ENCODE measurements at regions of chr9 and their contacts with region 1.

Region 1: GRCh38 chr9:34701769-34702736 is 7.9 kb downstream of the CCL21 start:
- DNase-seq: peak; percentile 89
- H3K4me3 Mint-ChIP-seq: peak overlapping the region; percentile 77
- H3K27ac Mint-ChIP-seq: peak overlapping the region; percentile 38
- H3K4me1 Mint-ChIP-seq: peaks cover 2% of the 10 kb centered on the region
- H3K27me3 Mint-ChIP-seq: peaks cover 2% of the 10 kb centered on the region

Region 2: GRCh38 chr9:34524349-34524748 is 177.7 kb before region 1 on chr9:
- CTCF ChIA-PET with region 1: no interaction called
- POLR2A ChIA-PET with region 1: no interaction called
- intact Hi-C with region 1: no loop called
- DNase-seq: no peak
- H3K4me3 Mint-ChIP-seq: no peak overlapping the region
- H3K27ac Mint-ChIP-seq: no peak overlapping the region
- H3K4me1 Mint-ChIP-seq: peaks cover 16% of the 10 kb centered on the region
- H3K27me3 Mint-ChIP-seq: peaks cover 5% of the 10 kb centered on the region

Region 3: DNA sequence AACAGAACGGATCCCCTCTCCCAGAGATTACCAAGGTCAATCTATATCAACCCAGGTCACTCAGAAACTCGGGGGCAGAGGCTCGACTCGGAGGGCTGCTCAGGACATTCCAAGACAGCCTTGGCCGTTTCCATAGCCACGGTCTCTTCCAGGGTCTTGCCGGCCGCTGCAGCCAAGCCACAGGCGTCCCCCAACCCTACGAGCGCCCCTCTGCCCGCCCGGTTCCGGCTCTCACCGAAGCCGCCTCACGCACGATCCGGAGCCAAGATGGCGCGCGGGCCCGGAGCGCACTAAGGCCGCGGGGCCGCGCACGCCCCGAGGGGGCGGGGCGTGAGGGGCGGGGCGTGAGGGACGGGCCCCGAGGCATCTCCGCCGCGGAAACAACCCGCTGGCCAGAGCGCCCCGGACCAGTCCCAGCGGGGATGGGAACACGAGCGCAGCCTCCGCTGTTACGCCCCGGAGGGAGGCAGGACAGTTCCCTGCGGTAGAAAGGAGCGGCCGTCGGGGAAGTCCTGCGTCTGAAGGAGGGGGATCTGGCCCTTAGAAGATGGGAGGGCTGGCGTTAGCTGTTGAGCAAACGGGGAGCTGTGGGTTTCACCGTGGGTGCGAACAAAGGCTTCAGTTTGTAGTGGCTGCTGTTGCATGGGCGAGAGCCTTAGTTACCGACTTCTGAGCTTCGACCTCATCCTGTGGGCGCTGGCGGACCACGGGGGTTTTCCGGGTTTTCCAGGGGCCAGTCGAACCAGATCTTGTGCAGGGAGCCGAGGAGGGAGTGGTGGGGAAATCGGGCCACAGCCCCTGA is 90.0 kb before region 1 on chr9 and contains the start of gene RPP25L:
- CTCF ChIA-PET with region 1: interaction called, 9 read pairs
- POLR2A ChIA-PET with region 1: no interaction called
- intact Hi-C with region 1: loop called (anchors 1 kb)
- DNase-seq: peak; percentile 88
- H3K4me3 Mint-ChIP-seq: peak within 1 kb of the TSS; percentile 89
- H3K27ac Mint-ChIP-seq: peak within 1 kb of the TSS; percentile 85
- H3K4me1 Mint-ChIP-seq: peaks cover 21% of the 10 kb centered on the region
- H3K27me3 Mint-ChIP-seq: no peaks in the 10 kb centered on the region
- total RNA-seq, gene RPP25L: 29.3 to 31.1 TPM

Region 4: DNA sequence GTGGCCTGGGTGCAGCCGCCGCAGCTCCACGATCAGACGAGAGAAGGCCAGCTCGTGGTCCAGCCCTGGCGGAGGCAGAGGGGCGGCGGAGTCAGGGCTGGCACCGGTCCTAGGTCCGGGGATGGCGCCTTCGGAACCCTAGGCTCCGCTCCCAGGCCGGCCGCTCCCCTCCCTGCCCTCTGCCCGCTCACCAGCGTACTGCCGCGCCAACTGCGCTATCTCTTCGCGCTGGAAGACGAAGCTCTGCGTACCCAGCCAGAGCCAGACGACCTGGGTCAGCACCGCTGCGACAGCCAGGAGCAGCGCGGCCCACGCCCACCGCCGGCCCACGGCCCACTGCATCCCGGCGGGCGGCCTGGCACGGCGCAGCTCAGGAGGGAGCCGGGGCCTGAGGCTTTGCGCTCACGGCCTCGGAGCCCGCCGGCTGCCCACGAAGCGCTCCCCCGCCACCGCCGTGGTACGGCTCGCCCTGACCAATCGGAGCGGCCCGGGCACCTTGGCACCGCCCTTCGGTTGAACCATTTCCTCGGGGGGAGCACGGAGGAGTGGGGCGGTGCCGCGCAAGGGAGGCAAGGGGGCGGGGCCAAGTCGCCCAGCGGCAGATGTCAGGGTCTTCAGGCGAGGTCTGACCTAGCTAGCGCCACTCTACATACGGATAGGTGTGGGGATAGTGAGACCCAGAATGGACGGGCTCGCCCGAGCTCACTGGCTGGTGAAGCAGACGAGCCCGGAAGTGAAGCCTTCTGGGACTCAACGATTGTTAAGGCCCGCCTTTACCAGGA is 64.5 kb before region 1 on chr9 and contains the start of gene SIGMAR1:
- CTCF ChIA-PET with region 1: interaction called, 16 read pairs
- POLR2A ChIA-PET with region 1: no interaction called
- intact Hi-C with region 1: no loop called
- DNase-seq: peak; percentile 94
- H3K4me3 Mint-ChIP-seq: peak within 1 kb of the TSS; percentile 94
- H3K27ac Mint-ChIP-seq: peak within 1 kb of the TSS; percentile 80
- H3K4me1 Mint-ChIP-seq: peaks cover 41% of the 10 kb centered on the region
- H3K27me3 Mint-ChIP-seq: no peaks in the 10 kb centered on the region
- total RNA-seq, gene SIGMAR1: 65.9 to 67.6 TPM

Region 5: DNA sequence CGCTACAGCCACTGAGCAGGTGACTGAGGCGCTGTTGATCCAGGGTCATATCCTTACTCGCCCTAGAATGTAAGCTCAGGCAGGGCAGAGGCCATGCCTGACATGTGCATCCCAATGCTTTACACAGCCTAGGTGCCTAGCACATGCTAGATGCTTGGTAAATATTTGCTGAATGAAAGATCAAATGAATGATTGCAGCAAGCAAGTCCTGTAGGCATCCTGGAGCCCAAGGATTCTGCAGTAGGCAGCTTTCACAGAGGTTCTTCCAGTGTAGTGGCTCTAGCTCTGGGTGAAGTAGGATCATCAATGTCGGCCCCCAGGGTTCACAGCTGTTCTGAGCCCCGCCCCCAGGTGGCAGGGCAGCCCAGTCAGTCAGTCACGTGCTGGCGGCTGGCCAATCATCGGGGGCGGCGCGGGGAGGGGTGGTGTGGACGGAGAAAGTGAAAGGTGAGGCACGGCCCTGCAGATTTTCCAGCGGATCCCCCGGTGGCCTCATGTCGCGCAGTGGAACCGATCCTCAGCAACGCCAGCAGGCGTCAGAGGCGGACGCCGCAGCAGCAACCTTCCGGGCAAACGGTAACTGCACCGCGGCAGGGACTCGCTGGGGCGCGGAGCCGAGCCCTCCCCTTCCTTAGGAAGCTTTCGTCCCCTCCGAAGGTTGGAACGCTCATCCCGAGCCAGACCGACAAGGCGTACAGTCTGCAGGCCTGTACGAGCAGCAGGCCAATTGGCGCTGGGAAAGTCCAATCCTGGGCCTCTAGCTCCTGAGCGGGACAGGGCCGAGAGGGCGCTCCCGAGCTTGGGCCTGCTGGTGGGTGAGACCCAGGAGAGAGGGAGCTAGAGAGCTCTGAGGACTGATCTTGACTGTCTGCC is 55.6 kb before region 1 on chr9 and contains the start of gene GALT:
- CTCF ChIA-PET with region 1: interaction called, 12 read pairs
- POLR2A ChIA-PET with region 1: no interaction called
- intact Hi-C with region 1: no loop called
- DNase-seq: peak; percentile 99
- H3K4me3 Mint-ChIP-seq: peak within 1 kb of the TSS; percentile 86
- H3K27ac Mint-ChIP-seq: peak within 1 kb of the TSS; percentile 84
- H3K4me1 Mint-ChIP-seq: peaks cover 28% of the 10 kb centered on the region
- H3K27me3 Mint-ChIP-seq: no peaks in the 10 kb centered on the region
- total RNA-seq, gene GALT: 56.0 to 59.2 TPM

Region 6: GRCh38 chr9:34659592-34660535 is 42.2 kb before region 1 on chr9:
- CTCF ChIA-PET with region 1: interaction called, 46 read pairs
- POLR2A ChIA-PET with region 1: interaction called, 3 read pairs
- intact Hi-C with region 1: loop called (anchors 2 kb)
- DNase-seq: no peak
- H3K4me3 Mint-ChIP-seq: no peak overlapping the region
- H3K27ac Mint-ChIP-seq: no peak overlapping the region
- H3K4me1 Mint-ChIP-seq: peaks cover 34% of the 10 kb centered on the region
- H3K27me3 Mint-ChIP-seq: no peaks in the 10 kb centered on the region

Region 7: GRCh38 chr9:34675048-34675714 is 26.9 kb before region 1 on chr9:
- CTCF ChIA-PET with region 1: interaction called, 49 read pairs
- POLR2A ChIA-PET with region 1: no interaction called
- intact Hi-C with region 1: loop called (anchors 1 kb)
- DNase-seq: peak; percentile 74
- H3K4me3 Mint-ChIP-seq: no peak overlapping the region
- H3K27ac Mint-ChIP-seq: no peak overlapping the region
- H3K4me1 Mint-ChIP-seq: peaks cover 2% of the 10 kb centered on the region
- H3K27me3 Mint-ChIP-seq: no peaks in the 10 kb centered on the region

Region 8: DNA sequence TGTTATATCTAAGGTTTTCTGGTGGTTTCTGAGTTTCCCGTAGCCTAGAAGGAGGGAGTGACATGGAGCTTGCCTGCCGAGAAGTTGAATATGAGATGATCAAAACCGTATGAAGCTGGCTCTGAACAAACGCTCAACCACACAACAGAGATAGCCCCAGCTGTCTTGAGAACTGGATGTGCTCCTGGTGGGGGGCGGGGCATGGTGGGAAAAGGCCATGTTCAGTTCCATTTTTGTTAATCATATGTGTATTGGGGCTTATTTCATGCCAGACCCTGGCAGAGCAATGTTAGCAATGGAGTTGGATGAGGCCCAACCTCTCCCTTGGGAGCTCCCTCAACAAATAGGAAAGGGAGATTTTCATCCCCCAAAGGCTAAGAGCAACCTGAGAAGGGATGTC is 15.8 kb before region 1 on chr9:
- CTCF ChIA-PET with region 1: interaction called, 18 read pairs
- POLR2A ChIA-PET with region 1: no interaction called
- intact Hi-C with region 1: no loop called
- DNase-seq: no peak
- H3K4me3 Mint-ChIP-seq: no peak overlapping the region
- H3K27ac Mint-ChIP-seq: no peak overlapping the region
- H3K4me1 Mint-ChIP-seq: peaks cover 12% of the 10 kb centered on the region
- H3K27me3 Mint-ChIP-seq: no peaks in the 10 kb centered on the region

Region 9: GRCh38 chr9:34759432-34760134 is 57.5 kb after region 1 on chr9:
- CTCF ChIA-PET with region 1: no interaction called
- POLR2A ChIA-PET with region 1: no interaction called
- intact Hi-C with region 1: no loop called
- DNase-seq: no peak
- H3K4me3 Mint-ChIP-seq: no peak overlapping the region
- H3K27ac Mint-ChIP-seq: no peak overlapping the region
- H3K4me1 Mint-ChIP-seq: peaks cover 2% of the 10 kb centered on the region
- H3K27me3 Mint-ChIP-seq: peaks cover 30% of the 10 kb centered on the region

Region 10: GRCh38 chr9:34876096-34876495 is 174.0 kb after region 1 on chr9:
- CTCF ChIA-PET with region 1: no interaction called
- POLR2A ChIA-PET with region 1: no interaction called
- intact Hi-C with region 1: no loop called
- DNase-seq: no peak
- H3K4me3 Mint-ChIP-seq: no peak overlapping the region
- H3K27ac Mint-ChIP-seq: no peak overlapping the region
- H3K4me1 Mint-ChIP-seq: no peaks in the 10 kb centered on the region
- H3K27me3 Mint-ChIP-seq: peaks cover 15% of the 10 kb centered on the region

Measured in activated CD4-positive, alpha-beta memory T cell treated with anti-CD3 and anti-CD28 coated beads for 36 hours (primary cell).